Activated CD4-positive, alpha-beta memory T cell treated with anti-CD3 and anti-CD28 coated beads for 36 hours (primary cell): ENCODE measurements at regions of chr21 and their contacts with region 1.

Region 1: GRCh38 chr21:36478207-36478701 is 1.7 kb downstream of the CLDN14 start:
- DNase-seq: peak; percentile 69
- H3K4me3 Mint-ChIP-seq: no peak overlapping the region
- H3K27ac Mint-ChIP-seq: no peak overlapping the region
- H3K4me1 Mint-ChIP-seq: peaks cover 6% of the 10 kb centered on the region
- H3K27me3 Mint-ChIP-seq: peaks cover 10% of the 10 kb centered on the region

Region 2: DNA sequence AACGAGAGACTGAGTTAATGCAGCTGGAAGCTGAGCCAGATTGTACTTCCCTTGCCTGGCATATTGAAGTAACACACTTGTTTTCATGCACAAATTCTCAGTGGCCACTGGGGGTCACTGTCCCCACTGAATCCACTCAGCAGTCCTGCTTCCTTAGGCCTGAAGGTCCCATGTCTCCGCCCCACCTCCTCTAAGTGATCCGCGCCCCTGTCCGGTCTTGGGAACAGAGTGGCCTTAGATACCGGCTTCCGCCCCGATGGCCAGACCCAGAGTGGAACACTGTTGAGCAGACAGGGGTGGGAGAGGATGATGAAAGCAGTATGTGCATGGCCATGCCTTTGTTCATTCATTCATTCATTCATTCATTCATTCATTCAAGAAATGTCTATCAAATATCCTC is 58.3 kb before region 1 on chr21:
- CTCF ChIA-PET with region 1: no interaction called
- POLR2A ChIA-PET with region 1: no interaction called
- intact Hi-C with region 1: loop called (anchors 5 kb)
- DNase-seq: peak; percentile 61
- H3K4me3 Mint-ChIP-seq: no peak overlapping the region
- H3K27ac Mint-ChIP-seq: no peak overlapping the region
- H3K4me1 Mint-ChIP-seq: no peaks in the 10 kb centered on the region
- H3K27me3 Mint-ChIP-seq: no peaks in the 10 kb centered on the region

Region 3: GRCh38 chr21:36429947-36430546 is 48.2 kb before region 1 on chr21:
- CTCF ChIA-PET with region 1: no interaction called
- POLR2A ChIA-PET with region 1: interaction called, 4 read pairs
- intact Hi-C with region 1: loop called (anchors 1 kb)
- DNase-seq: peak; percentile 91
- H3K4me3 Mint-ChIP-seq: peak overlapping the region; percentile 66
- H3K27ac Mint-ChIP-seq: peak overlapping the region; percentile 71
- H3K4me1 Mint-ChIP-seq: peaks cover 12% of the 10 kb centered on the region
- H3K27me3 Mint-ChIP-seq: peaks cover 18% of the 10 kb centered on the region